ENCODE measurements at regions of chr15 and their contacts with region 1.

Region 1: DNA sequence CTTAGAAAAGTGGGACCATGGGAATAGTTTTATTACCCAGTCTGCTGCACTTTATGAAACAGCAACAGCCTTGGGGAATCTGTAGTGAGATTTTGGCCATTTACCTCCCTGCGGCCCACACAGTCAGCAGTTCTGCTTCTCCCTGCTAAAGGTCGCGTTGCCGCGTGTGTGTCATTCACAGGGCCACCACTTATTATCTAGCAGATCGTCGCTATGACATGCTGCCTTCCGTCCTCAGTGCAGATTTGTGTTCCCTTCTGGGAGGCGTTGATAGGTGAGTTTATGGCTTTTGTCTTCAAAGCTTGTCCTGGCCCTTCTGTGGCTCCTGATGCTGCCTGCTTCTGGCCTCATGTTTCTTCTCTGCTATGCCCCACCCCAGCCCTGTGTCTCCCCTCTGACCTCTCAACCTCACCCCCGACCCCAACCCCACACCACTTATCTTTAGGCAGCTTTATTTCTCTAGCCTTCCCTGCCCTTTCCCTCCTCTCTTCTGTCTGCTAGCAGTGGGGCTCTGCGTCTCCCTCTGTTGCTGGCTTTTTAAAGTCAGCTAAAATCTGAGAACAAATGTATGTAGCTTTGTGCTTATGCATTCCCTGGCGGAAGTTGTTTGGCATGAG is 30.1 kb downstream of the DIS3L start:
- DNase-seq: no peak
- H3K4me3 ChIP-seq: no peak overlapping the region
- H3K27ac ChIP-seq: no peak overlapping the region
- H3K4me1 ChIP-seq: no peaks in the 10 kb centered on the region
- H3K27me3 ChIP-seq: no peaks in the 10 kb centered on the region
- CTCF ChIP-seq: no peak

Region 2: DNA sequence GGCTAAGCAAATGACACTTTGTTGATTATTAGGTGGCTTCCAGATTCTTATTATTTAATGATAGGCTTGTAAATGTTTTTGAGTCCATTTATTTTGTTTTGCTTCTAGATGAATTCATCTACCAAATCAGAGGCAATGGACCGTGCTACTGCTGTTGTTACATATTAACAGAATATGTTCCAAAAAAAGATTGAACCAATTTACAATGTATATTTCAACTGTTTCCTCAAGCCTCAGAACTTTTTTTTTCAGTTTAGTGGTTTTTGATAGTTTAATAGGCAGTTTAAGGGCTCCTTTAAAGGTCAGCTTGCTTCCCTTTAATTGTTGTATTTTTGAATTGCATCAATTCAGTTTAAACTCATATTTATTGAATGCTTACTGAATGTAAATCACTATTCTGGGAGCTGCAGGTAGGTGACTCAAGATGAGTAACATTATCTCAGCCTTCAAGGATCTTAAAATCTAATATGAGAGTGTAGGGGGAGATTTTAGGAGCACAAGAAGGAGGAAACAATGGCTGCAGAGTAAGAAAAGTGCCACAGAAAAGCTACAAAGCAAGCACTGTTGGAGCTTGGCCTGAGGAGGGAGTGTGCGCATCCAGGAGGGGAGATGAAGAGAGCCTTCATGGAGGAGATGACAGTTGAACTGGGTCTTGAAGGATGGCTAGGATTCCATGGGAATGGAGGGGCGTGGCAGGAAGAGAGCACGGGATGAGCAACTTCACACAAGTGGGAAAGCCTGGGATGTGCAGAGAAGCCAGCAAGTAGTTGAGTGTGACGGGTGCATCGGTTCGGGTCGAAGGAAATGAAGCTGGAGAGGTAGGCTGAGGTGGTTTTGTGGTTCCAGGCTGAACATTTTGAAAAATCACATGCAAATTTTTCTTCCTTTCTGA is 78.0 kb after region 1 on chr15:
- CTCF ChIA-PET with region 1: no interaction called
- dilution Hi-C with region 1: loop called (anchors 5 kb)
- in situ Hi-C with region 1: no loop called
- intact Hi-C with region 1: no loop called
- DNase-seq: peak; percentile 52
- H3K4me3 ChIP-seq: no peak overlapping the region
- H3K27ac ChIP-seq: no peak overlapping the region
- H3K4me1 ChIP-seq: peaks cover 22% of the 10 kb centered on the region
- H3K27me3 ChIP-seq: no peaks in the 10 kb centered on the region
- CTCF ChIP-seq: no peak

Region 3: DNA sequence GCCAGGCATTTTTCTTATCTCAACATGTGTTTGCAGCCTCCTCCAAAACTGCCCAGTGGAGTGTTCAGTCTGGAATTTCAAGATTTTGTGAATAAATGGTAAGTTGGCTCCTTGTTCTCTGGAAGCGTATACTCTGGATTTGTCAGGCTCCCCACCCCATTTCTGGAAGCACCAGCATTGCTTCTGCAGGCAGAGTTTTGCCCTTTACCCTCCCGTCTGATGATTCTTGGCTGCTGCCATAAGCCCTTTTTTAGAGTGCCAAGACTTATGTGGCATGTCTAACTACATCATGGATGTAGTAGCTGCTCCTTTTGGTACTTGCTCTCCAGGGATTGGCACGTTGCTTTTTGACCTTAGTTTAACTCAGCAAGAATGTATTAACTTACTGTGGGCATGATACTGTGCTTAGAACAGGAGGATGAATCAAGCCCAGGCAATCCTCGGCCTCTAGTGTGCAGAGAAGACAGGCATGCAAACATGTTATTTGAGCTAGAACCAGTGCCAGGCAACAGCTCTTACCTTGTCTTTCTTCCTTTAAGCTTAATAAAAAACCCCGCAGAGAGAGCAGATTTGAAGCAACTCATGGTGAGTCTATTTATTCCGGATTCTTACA is 165.9 kb after region 1 on chr15:
- CTCF ChIA-PET with region 1: no interaction called
- dilution Hi-C with region 1: loop called (anchors 5 kb)
- in situ Hi-C with region 1: no loop called
- intact Hi-C with region 1: no loop called
- DNase-seq: no peak
- H3K4me3 ChIP-seq: no peak overlapping the region
- H3K27ac ChIP-seq: no peak overlapping the region
- H3K4me1 ChIP-seq: no peaks in the 10 kb centered on the region
- H3K27me3 ChIP-seq: no peaks in the 10 kb centered on the region
- CTCF ChIP-seq: no peak